PC-9 (cell line): ENCODE measurements at regions of chr5 and their contacts with region 1.

Region 1: DNA sequence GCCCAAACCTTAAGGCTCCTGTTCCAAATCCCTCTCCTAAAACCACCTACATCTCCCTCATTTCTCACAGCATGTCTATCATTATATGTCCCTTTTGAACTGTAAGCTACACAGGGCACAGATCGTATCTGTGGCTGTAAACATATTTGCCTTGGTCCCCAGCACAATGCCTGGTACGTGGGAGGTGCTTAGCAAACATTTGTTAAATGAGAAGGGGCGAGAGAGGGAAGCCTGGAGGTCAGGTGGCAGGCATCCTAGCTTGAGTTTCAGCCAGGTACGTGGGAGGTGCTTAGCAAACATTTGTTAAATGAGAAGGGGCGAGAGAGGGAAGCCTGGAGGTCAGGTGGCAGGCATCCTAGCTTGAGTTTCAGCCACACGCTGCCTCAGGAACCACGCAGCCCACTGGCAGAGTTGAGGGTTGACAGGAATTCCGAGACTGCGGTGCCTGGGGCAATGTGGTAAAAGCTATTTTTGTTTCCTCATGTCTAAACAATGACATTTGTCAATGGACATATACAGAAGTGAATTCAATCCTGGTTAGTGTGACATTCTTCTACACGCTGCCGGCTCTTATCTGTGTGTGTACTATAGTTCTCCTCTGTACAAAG is 113.6 kb downstream of the EFNA5 start:
- DNase-seq: peak; percentile 95 to 99
- H3K4me3 ChIP-seq: peak overlapping the region; percentile 38; the same call in 1 of the 2 replicates
- H3K27ac ChIP-seq: peak overlapping the region; percentile 96
- H3K4me1 ChIP-seq: peaks cover 65% of the 10 kb centered on the region
- H3K27me3 ChIP-seq: no peaks in the 10 kb centered on the region
- CTCF ChIP-seq: no peak

Region 2: DNA sequence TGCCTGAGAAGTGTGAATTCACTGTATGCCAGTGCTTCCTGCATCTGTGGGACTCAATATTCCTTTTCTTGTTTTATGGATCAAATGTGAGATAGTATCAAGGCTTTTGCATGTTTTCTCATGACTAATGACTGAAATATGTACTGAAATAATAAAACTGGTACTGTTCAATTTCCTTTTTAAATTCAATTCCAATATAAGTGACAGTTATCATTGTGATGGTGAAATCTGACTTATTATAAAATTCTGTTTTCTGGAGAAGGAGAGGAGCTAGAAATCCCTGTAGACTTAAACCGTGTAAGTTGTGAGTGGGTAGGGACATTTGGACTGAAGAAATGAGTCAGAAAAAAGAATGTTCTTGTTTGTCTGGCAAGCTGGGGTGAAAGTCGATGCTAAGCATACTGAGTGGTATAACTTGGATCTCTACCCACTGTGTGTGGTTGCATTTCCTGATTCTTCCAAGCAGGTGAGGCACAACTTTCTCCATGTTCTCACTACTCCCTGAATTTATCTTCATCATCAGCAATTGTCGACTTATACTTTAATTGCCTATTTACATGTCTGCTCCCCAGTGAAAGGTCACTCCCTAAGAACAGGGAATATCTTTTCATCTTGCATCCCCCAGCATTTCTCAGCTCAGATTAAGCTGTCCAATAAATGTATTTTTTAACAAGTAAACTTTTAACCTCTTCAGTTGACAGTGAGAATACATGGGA is 131.5 kb before region 1 on chr5:
- CTCF ChIA-PET with region 1: no interaction called
- POLR2A ChIA-PET with region 1: no interaction called
- intact Hi-C with region 1: loop called (anchors 2 kb)
- DNase-seq: peak; percentile 43 to 89
- H3K4me3 ChIP-seq: no peak overlapping the region; the same call in 1 of the 2 replicates
- H3K27ac ChIP-seq: peak overlapping the region; percentile 85
- H3K4me1 ChIP-seq: peaks cover 68% of the 10 kb centered on the region
- H3K27me3 ChIP-seq: no peaks in the 10 kb centered on the region
- CTCF ChIP-seq: no peak

Region 3: DNA sequence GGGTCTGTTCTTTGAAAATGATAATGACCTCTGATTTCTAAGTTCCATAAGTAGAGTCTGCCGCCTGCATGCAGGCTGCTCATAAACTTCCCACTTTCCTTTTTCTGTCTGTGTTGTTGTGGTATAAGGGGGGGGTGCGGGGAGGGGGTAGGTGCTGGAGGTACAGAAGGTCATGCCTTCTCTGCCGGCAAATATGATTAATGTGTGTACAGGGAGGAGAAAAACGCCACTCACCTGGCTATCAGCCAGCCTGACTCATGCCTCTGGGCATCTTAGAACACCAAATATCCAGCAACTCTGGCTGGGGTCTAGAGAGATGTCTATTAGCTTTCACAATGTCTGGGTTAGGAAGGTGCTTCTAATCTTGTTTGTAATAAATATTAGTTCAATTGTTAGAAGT is 14.7 kb before region 1 on chr5:
- CTCF ChIA-PET with region 1: interaction called, 4 read pairs
- POLR2A ChIA-PET with region 1: no interaction called
- intact Hi-C with region 1: loop called (anchors 1 kb)
- DNase-seq: peak; percentile 88 to 97
- H3K4me3 ChIP-seq: peak overlapping the region; percentile 26; the same call in 1 of the 2 replicates
- H3K27ac ChIP-seq: peak overlapping the region; percentile 93
- H3K4me1 ChIP-seq: peaks cover 59% of the 10 kb centered on the region
- H3K27me3 ChIP-seq: no peaks in the 10 kb centered on the region
- CTCF ChIP-seq: no peak

Region 4: DNA sequence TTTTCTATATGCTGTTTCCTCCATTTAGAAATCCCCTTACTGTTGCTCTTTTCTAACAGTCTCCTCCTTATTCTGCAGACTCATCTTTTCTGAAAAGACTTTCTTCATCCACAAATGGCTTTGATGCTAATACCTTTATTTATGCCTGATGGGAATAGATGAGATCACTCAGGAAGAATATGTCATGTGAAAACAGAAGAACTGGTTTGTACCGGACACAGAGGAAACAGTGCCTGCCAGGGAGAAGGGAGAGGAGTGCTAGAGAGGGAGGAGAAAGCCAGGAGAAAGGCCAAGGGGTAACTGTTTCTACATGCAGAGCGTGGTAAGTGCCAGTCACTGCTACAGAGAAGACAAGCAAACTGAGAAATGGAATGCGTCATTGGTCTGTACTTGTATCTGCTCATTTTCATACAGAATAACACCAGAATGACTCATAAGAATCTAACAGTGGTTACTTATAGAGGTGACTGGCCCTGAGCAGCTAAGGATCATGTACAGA is 1898.5 kb after region 1 on chr5:
- CTCF ChIA-PET with region 1: no interaction called
- POLR2A ChIA-PET with region 1: no interaction called
- intact Hi-C with region 1: no loop called
- DNase-seq: peak; percentile 53 to 69
- H3K4me3 ChIP-seq: no peak overlapping the region
- H3K27ac ChIP-seq: peak overlapping the region; percentile 43
- H3K4me1 ChIP-seq: peaks cover 21% of the 10 kb centered on the region; the same call in 1 of the 2 replicates
- H3K27me3 ChIP-seq: no peaks in the 10 kb centered on the region
- CTCF ChIP-seq: no peak